Dorsolateral prefrontal cortex (tissue), 120 donors: ENCODE measurements at regions of chr5 and their contacts with region 1.

Region 1: GRCh38 chr5:177609076-177610059 is 9.4 kb downstream of the B4GALT7 start:
- DNase-seq: peak in 2 of 10 donors; percentile 27 to 32
- H3K4me3 ChIP-seq: no peak overlapping the region
- H3K27ac ChIP-seq: peak overlapping the region in 1 of 59 donors; percentile 5
- H3K27me3 ChIP-seq: no peaks in the 10 kb centered on the region
- CTCF ChIP-seq: no peak

Region 2: GRCh38 chr5:177546258-177546741 is 63.1 kb before region 1 on chr5:
- intact Hi-C with region 1: no loop called
- DNase-seq: peak in 1 of 10 donors; percentile 39
- H3K4me3 ChIP-seq: peak overlapping the region in 5 of 59 donors; percentile 1 to 12 (median 11)
- H3K27ac ChIP-seq: peak overlapping the region in 57 of 59 donors; percentile 12 to 94 (median 75)
- H3K27me3 ChIP-seq: no peaks in the 10 kb centered on the region
- CTCF ChIP-seq: no peak

Region 3: GRCh38 chr5:178058321-178059012 is 449.1 kb after region 1 on chr5:
- intact Hi-C with region 1: loop called in 1 of 2 experiments (anchors 5 kb)
- DNase-seq: no peak
- H3K4me3 ChIP-seq: no peak overlapping the region
- H3K27ac ChIP-seq: no peak overlapping the region
- H3K27me3 ChIP-seq: no peaks in the 10 kb centered on the region
- CTCF ChIP-seq: no peak

Region 4: DNA sequence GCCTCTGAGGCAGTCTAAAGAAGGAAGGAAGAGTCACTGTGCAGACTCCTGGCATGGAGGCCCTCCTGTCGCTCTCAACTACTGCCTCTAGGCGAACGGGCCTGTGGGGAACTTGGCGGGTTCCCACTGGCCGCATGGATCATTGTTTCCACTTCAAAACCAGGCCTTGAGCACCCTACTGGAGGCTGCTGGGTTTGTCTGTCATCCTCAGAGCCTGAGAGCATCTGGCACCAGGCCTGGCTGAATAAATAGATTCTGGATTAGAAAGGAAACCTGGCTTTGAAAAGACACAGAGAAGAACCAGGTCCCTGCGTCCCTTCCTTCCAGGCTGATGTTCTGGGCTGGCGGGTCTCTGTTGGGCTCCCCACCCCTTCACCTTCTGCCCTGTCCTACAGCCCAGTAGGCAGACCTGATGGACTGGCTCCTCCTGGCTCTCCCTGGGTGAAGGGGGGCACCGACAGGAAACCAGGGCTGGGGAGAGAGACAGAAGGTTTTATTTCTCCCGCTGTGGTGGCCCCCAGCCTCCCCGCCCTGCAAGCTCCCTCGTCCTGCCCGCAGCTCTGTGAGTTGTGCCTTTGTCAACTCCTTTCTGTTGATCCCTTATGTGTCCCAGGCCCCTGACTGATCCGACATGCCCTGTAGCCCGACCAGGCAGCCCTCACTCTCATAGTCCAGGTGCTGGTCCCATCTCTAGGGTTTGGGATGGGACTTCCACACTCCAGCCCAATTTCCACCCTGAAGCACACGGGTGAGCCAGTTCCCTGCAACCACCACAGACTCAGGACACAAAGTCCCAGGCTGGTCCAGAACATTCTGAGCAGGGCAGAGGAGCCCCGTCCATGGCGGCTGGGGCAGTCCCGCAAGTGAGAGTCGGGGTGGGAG is 1685.8 kb after region 1 on chr5:
- intact Hi-C with region 1: loop called in 1 of 2 experiments (anchors 10 kb)
- DNase-seq: peak in 2 of 10 donors; percentile 26 to 29
- H3K4me3 ChIP-seq: no peak overlapping the region
- H3K27ac ChIP-seq: no peak overlapping the region
- H3K27me3 ChIP-seq: no peaks in the 10 kb centered on the region
- CTCF ChIP-seq: no peak